Heart left ventricle (tissue), 16 donors: ENCODE measurements at regions of chr21 and their contacts with region 1.

Region 1: DNA sequence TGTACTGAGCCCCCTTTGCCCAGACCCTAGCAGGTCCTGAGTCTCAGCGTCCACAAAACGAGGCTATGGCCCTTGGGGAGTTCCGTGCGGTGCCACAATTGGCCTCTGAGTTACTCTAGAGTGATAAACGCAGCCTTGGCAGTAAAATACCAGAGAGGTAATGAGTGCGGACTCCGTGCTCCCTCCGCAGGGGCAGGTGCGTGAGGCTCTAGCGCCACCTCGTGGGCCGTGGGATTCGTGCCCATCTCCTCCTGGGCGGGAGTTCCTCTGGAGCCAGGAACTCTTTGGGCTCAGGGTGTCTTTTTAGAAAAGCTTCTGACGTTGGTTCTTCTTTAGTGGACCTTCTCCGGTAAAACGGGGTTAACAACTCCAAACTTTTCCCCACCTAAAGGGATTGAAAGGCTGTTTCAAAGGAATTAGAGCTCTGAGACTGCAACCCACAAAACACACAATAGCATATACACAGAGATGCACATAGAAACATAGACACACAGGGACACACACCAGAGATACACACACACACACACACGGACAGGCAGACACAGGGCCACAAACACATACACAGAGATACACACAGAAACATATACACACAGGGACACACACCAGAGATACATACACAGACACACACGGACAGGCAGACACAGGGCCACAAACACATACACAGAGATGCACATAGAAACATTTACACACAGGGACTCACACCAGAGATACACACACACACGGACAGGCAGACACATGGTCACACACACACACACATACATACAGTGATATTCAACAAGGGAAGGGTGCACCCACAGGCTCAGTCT is 99.4 kb downstream of the KCNJ15 start:
- DNase-seq: peak; percentile 77 to 87 (median 79)
- ATAC-seq: peak; percentile 75 to 93 (median 86)
- H3K4me3 ChIP-seq: no peak overlapping the region
- H3K27ac ChIP-seq: no peak overlapping the region
- H3K4me1 ChIP-seq: peaks cover 0 to 20% (median 0%) of the 10 kb centered on the region in 12 donors
- H3K27me3 ChIP-seq: peaks cover 0 to 7% (median 0%) of the 10 kb centered on the region in 9 donors
- CTCF ChIP-seq: peak; percentile 90 to 98 (median 96)
- POLR2A ChIP-seq: no peak

Region 2: DNA sequence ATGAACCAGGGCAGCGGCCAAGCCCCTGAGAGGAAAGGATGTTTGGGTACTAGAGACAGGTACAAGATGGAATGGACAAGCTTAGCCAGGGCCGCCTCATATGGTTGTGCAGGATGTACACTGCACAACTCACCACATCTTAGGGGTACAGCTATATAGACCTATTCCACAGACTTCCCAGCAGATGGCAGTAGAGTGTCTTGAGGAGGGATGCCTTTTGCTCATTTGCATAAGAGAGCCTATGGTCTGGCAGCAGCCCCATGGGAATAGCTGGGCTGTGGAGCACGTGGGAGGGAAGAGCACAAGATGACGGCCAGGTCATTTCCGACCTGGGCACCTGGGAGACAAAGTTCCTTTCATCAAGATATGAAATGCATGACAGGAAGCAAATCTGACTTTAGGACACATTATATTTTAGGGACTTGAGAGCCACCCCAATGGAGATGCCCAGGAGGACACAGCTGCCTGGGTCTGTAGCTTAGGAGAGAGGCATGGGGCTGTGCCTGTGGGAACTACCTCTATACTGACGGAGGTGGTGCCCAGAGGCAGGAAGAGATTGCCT is 655.5 kb before region 1 on chr21:
- intact Hi-C with region 1: loop called in 2 of 10 experiments (anchors 5 to 10 kb)
- DNase-seq: peak in 2 of 5 donors; percentile 40 to 43
- ATAC-seq: peak; percentile 15 to 90 (median 82)
- H3K4me3 ChIP-seq: no peak overlapping the region
- H3K27ac ChIP-seq: no peak overlapping the region
- H3K4me1 ChIP-seq: no peaks in the 10 kb centered on the region
- H3K27me3 ChIP-seq: peaks cover 0 to 8% (median 0%) of the 10 kb centered on the region in 9 donors
- CTCF ChIP-seq: peak; percentile 41 to 74 (median 58)
- POLR2A ChIP-seq: no peak

Region 3: GRCh38 chr21:38159355-38159754 is 196.8 kb before region 1 on chr21:
- intact Hi-C with region 1: loop called (anchors 1 to 2 kb)
- DNase-seq: peak in 4 of 5 donors; percentile 45 to 70 (median 50)
- ATAC-seq: peak in 3 of 4 donors; percentile 55 to 66 (median 65)
- H3K4me3 ChIP-seq: no peak overlapping the region
- H3K27ac ChIP-seq: no peak overlapping the region
- H3K4me1 ChIP-seq: peaks cover 0 to 7% (median 0%) of the 10 kb centered on the region in 12 donors
- H3K27me3 ChIP-seq: peaks cover 0 to 18% (median 5%) of the 10 kb centered on the region in 9 donors
- CTCF ChIP-seq: peak; percentile 66 to 88 (median 80)
- POLR2A ChIP-seq: no peak

Region 4: DNA sequence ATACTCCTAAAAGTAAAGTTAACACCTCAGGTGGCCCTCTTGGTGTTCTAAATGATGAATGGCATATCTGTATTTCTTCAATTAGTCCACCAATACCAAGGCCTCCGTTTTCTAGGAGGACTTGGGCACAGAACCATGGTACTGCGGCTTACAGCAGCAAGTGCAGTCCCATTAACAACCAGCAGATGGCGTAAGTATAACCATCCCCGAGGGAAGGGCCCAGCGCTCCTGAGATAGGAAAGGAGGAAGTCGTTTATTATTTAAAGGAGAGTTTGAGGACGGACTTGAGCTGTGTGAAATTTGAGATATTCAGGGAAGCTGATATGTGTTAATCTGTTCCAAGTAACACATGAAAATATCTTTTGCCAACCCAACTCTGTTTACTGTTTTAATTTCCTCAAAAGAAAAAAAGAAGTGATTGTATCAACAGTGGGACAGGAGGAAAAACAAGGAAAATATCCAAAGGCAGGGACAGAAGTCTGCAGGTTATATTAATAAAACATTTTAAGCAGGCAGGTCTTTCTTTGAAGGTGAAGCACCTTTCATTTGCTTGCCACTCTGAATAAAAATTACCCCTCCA is 137.1 kb before region 1 on chr21:
- intact Hi-C with region 1: loop called (anchors 1 to 5 kb)
- DNase-seq: peak; percentile 62 to 71 (median 68)
- ATAC-seq: peak in 3 of 4 donors; percentile 72 to 85 (median 85)
- H3K4me3 ChIP-seq: no peak overlapping the region
- H3K27ac ChIP-seq: peak overlapping the region in 1 of 12 donors; percentile 22
- H3K4me1 ChIP-seq: peaks cover 0 to 6% (median 0%) of the 10 kb centered on the region in 12 donors
- H3K27me3 ChIP-seq: peaks cover 0 to 1% (median 0%) of the 10 kb centered on the region in 9 donors
- CTCF ChIP-seq: peak; percentile 92 to 98 (median 96)
- POLR2A ChIP-seq: no peak

Region 5: GRCh38 chr21:38470762-38471161 is 114.6 kb after region 1 on chr21:
- intact Hi-C with region 1: no loop called
- DNase-seq: no peak
- ATAC-seq: no peak
- H3K4me3 ChIP-seq: no peak overlapping the region
- H3K27ac ChIP-seq: no peak overlapping the region
- H3K4me1 ChIP-seq: peaks cover 0 to 49% (median 18%) of the 10 kb centered on the region in 12 donors
- H3K27me3 ChIP-seq: no peaks in the 10 kb centered on the region
- CTCF ChIP-seq: no peak
- POLR2A ChIP-seq: no peak